ENCODE measurements at regions of chr5 and their contacts with region 1.

Region 1: DNA sequence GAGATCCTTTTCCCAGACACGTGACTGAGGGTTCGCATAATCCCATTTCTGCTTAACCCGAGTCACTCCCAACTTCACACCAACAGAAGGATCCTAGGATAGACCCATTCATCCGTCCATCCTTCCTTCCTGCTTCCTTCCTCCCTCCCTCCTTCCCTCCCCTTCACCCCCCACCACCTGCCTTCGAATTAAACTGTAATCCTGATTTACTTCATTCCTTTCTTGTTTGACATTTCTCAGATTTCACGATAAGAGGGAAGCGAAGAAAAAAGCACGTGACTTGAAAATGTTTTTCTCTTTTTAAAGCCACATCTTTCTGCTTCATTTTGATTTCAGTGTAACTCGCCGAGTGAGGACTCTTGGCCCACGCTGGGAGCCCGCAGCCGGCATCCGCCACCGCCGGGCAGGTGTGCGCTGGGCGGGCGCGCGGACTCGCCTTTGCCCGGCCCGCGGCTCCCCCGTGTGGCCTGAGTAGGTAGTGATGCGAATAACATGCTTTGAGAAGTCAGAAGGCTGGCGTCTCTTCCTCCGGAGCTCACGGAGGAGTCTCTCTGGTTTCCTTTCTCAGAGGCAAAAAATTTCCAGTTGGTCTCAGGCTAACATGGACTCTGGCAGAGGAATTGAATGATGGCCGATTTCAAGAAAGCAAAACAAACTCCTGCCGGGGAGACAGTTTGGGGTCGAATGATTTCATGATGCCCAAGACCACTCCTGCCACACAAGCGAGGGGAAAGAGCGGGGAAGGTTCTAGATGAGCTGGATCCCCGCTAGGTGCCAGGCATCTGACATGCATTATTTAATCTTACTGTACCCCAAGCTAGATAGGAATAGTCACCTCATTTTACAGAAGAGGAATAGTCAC is 117.7 kb downstream of the SLC12A2 start:
- DNase-seq: peak; percentile 73 to 79 (median 74)
- H3K4me3 ChIP-seq: no peak overlapping the region
- H3K4me3 Mint-ChIP-seq: peak overlapping the region in 7 of 8 donors; percentile 28 to 74 (median 51)
- H3K27ac ChIP-seq: no peak overlapping the region
- H3K27ac Mint-ChIP-seq: peak overlapping the region in 2 of 7 donors; percentile 32 to 43
- H3K4me1 ChIP-seq: peaks cover 29% of the 10 kb centered on the region
- H3K4me1 Mint-ChIP-seq: peaks cover 26 to 33% (median 28%) of the 10 kb centered on the region in 4 donors
- H3K27me3 ChIP-seq: no peaks in the 10 kb centered on the region
- H3K27me3 Mint-ChIP-seq: peaks cover 2 to 4% of the 10 kb centered on the region in 2 donors

Region 2: GRCh38 chr5:127564002-127564769 is 637.1 kb before region 1 on chr5:
- CTCF ChIA-PET with region 1: interaction called, 40 read pairs
- POLR2A ChIA-PET with region 1: no interaction called
- intact Hi-C with region 1: no loop called
- DNase-seq: peak; percentile 42 to 57 (median 51)
- H3K4me3 ChIP-seq: no peak overlapping the region
- H3K4me3 Mint-ChIP-seq: no peak overlapping the region
- H3K27ac ChIP-seq: no peak overlapping the region
- H3K27ac Mint-ChIP-seq: no peak overlapping the region
- H3K4me1 ChIP-seq: no peaks in the 10 kb centered on the region
- H3K4me1 Mint-ChIP-seq: peaks cover 0 to 8% (median under 1%) of the 10 kb centered on the region in 4 donors
- H3K27me3 ChIP-seq: peaks cover 3% of the 10 kb centered on the region
- H3K27me3 Mint-ChIP-seq: peaks cover 4 to 27% of the 10 kb centered on the region in 2 donors

Region 3: GRCh38 chr5:127746756-127747155 is 454.5 kb before region 1 on chr5:
- CTCF ChIA-PET with region 1: no interaction called
- POLR2A ChIA-PET with region 1: no interaction called
- intact Hi-C with region 1: loop called (anchors 1 kb)
- DNase-seq: peak in 3 of 5 donors; percentile 7 to 16 (median 13)
- H3K4me3 ChIP-seq: no peak overlapping the region
- H3K4me3 Mint-ChIP-seq: no peak overlapping the region
- H3K27ac ChIP-seq: no peak overlapping the region
- H3K27ac Mint-ChIP-seq: no peak overlapping the region
- H3K4me1 ChIP-seq: no peaks in the 10 kb centered on the region
- H3K4me1 Mint-ChIP-seq: no peaks in the 10 kb centered on the region
- H3K27me3 ChIP-seq: no peaks in the 10 kb centered on the region
- H3K27me3 Mint-ChIP-seq: peaks cover 5 to 8% of the 10 kb centered on the region in 2 donors

Region 4: GRCh38 chr5:127757576-127757975 is 443.7 kb before region 1 on chr5:
- CTCF ChIA-PET with region 1: interaction called, 8 read pairs
- POLR2A ChIA-PET with region 1: no interaction called
- intact Hi-C with region 1: loop called (anchors 1 kb)
- DNase-seq: peak; percentile 11 to 52 (median 20)
- H3K4me3 ChIP-seq: no peak overlapping the region
- H3K4me3 Mint-ChIP-seq: no peak overlapping the region
- H3K27ac ChIP-seq: no peak overlapping the region
- H3K27ac Mint-ChIP-seq: peak overlapping the region in 1 of 7 donors; percentile 32
- H3K4me1 ChIP-seq: no peaks in the 10 kb centered on the region
- H3K4me1 Mint-ChIP-seq: peaks cover 0 to 6% (median 0%) of the 10 kb centered on the region in 4 donors
- H3K27me3 ChIP-seq: no peaks in the 10 kb centered on the region
- H3K27me3 Mint-ChIP-seq: peaks cover 0 to 2% of the 10 kb centered on the region in 2 donors

Region 5: GRCh38 chr5:127875235-127876021 is 325.9 kb before region 1 on chr5:
- CTCF ChIA-PET with region 1: interaction called, 17 read pairs
- POLR2A ChIA-PET with region 1: no interaction called
- intact Hi-C with region 1: no loop called
- DNase-seq: peak in 4 of 5 donors; percentile 7 to 10 (median 9)
- H3K4me3 ChIP-seq: no peak overlapping the region
- H3K4me3 Mint-ChIP-seq: no peak overlapping the region
- H3K27ac ChIP-seq: no peak overlapping the region
- H3K27ac Mint-ChIP-seq: no peak overlapping the region
- H3K4me1 ChIP-seq: no peaks in the 10 kb centered on the region
- H3K4me1 Mint-ChIP-seq: no peaks in the 10 kb centered on the region
- H3K27me3 ChIP-seq: no peaks in the 10 kb centered on the region
- H3K27me3 Mint-ChIP-seq: peaks cover 0 to 4% of the 10 kb centered on the region in 2 donors

Region 6: GRCh38 chr5:128220841-128221240 is 19.5 kb after region 1 on chr5:
- CTCF ChIA-PET with region 1: no interaction called
- POLR2A ChIA-PET with region 1: no interaction called
- intact Hi-C with region 1: no loop called
- DNase-seq: no peak
- H3K4me3 ChIP-seq: no peak overlapping the region
- H3K4me3 Mint-ChIP-seq: no peak overlapping the region
- H3K27ac ChIP-seq: no peak overlapping the region
- H3K27ac Mint-ChIP-seq: no peak overlapping the region
- H3K4me1 ChIP-seq: no peaks in the 10 kb centered on the region
- H3K4me1 Mint-ChIP-seq: no peaks in the 10 kb centered on the region
- H3K27me3 ChIP-seq: no peaks in the 10 kb centered on the region
- H3K27me3 Mint-ChIP-seq: peaks cover 3 to 8% of the 10 kb centered on the region in 2 donors

Region 7: DNA sequence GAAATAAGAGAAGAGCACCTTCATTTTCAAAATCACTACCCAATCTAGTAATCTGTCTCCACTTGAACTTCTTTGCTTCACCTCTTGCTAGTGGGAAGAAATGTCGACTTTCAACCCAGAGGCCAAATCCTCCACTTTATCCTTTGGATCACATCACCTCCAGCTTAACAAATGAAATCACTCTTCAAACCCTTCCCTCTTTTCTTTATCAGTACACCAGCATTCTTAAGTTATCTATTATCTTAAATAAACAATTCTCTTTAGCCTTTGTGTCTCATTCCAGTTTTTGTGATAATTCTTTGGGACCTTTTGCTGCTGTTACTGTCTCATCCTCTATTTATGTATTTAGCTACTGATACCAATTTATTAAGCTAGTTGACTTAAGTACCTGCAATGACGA is 364.8 kb after region 1 on chr5:
- CTCF ChIA-PET with region 1: no interaction called
- POLR2A ChIA-PET with region 1: no interaction called
- intact Hi-C with region 1: no loop called
- DNase-seq: no peak
- H3K4me3 ChIP-seq: no peak overlapping the region
- H3K4me3 Mint-ChIP-seq: no peak overlapping the region
- H3K27ac ChIP-seq: no peak overlapping the region
- H3K27ac Mint-ChIP-seq: no peak overlapping the region
- H3K4me1 ChIP-seq: no peaks in the 10 kb centered on the region
- H3K4me1 Mint-ChIP-seq: no peaks in the 10 kb centered on the region
- H3K27me3 ChIP-seq: no peaks in the 10 kb centered on the region
- H3K27me3 Mint-ChIP-seq: no peaks in the 10 kb centered on the region

Region 8: DNA sequence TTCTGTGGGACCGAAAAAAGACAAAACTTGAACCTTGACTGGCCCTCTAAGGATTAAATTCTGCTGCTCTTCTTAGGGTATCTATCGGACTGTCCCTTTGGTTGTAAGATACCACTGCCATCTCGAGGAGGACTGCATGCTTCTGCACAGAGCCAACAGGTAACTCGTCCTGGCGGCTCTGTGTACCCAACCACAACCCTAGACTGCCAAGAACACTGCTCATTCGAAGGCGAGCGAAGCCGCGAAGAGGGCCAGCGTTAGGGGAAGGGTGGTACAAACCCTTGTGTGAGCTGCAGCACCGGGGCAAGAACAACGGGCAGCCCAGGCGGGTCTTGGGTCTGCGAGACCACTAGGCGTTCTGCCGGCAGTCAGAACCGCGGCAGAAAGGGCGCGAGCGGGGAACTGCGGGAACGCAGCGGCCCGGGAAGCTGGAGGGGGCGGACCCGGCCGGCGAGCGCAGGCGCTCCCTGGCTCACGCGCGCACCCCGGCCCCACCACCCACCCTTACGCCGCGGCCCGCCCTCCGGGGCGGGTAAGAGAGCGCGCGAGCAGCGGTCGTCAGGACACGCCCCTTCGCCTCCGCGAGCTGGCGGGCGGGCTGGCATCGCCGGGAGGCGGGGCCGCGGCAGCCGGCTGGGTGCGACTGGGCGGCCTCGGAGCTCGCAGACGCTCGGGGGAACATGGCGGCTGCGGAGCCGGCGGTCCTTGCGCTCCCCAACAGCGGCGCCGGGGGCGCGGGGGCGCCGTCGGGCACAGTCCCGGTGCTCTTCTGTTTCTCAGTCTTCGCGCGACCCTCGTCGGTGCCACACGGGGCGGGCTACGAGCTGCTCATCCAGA is 893.0 kb after region 1 on chr5 and contains the start of gene ISOC1:
- CTCF ChIA-PET with region 1: no interaction called
- POLR2A ChIA-PET with region 1: no interaction called
- intact Hi-C with region 1: loop called (anchors 10 kb)
- DNase-seq: peak; percentile 88 to 95 (median 93)
- H3K4me3 ChIP-seq: peak within 1 kb of the TSS; percentile 69 to 83
- H3K4me3 Mint-ChIP-seq: peak within 1 kb of the TSS; percentile 89 to 94 (median 92)
- H3K27ac ChIP-seq: peak within 1 kb of the TSS; percentile 65
- H3K27ac Mint-ChIP-seq: peak within 1 kb of the TSS; percentile 85 to 93 (median 92)
- H3K4me1 ChIP-seq: peaks cover 41% of the 10 kb centered on the region
- H3K4me1 Mint-ChIP-seq: peaks cover 22 to 39% (median 30%) of the 10 kb centered on the region in 4 donors
- H3K27me3 ChIP-seq: no peaks in the 10 kb centered on the region
- H3K27me3 Mint-ChIP-seq: peaks cover 0 to 5% of the 10 kb centered on the region in 2 donors
- total RNA-seq, gene ISOC1: 13.7 to 16.6 TPM

Measured in CD4-positive, alpha-beta memory T cell (primary cell).